Right ventricle myocardium superior (tissue), 1 donor: ENCODE measurements at regions of chr1 and their contacts with region 1.

Region 1: GRCh38 chr1:203504397-203505250 is 10.7 kb downstream of the OPTC start:
- DNase-seq: peak; percentile 85
- ATAC-seq: peak; percentile 64

Region 2: GRCh38 chr1:202982715-202983430 is 521.8 kb before region 1 on chr1:
- intact Hi-C with region 1: no loop called
- DNase-seq: no peak
- ATAC-seq: no peak

Region 3: GRCh38 chr1:203609979-203610493 is 105.4 kb after region 1 on chr1:
- intact Hi-C with region 1: loop called (anchors 5 kb)
- DNase-seq: no peak
- ATAC-seq: no peak

Region 4: GRCh38 chr1:203625628-203626019 is 121.0 kb after region 1 on chr1:
- intact Hi-C with region 1: loop called (anchors 5 kb)
- DNase-seq: no peak
- ATAC-seq: peak; percentile 49

Region 5: GRCh38 chr1:203702130-203702577 is 197.5 kb after region 1 on chr1:
- intact Hi-C with region 1: loop called (anchors 2 kb)
- DNase-seq: no peak
- ATAC-seq: peak; percentile 74

Region 6: GRCh38 chr1:203769505-203770343 is 265.1 kb after region 1 on chr1:
- intact Hi-C with region 1: loop called (anchors 10 kb)
- DNase-seq: peak; percentile 82
- ATAC-seq: peak; percentile 93

Region 7: GRCh38 chr1:203871107-203871875 is 366.7 kb after region 1 on chr1:
- intact Hi-C with region 1: no loop called
- DNase-seq: no peak
- ATAC-seq: peak; percentile 80